Transverse colon (tissue), 4 donors: ENCODE measurements at regions of chr18 and their contacts with region 1.

Region 1: GRCh38 chr18:31555971-31556747 is 35.5 kb upstream of the TTR start:
- DNase-seq: peak; percentile 18
- H3K4me3 ChIP-seq: no peak overlapping the region
- H3K27ac ChIP-seq: no peak overlapping the region
- H3K4me1 ChIP-seq: no peaks in the 10 kb centered on the region
- H3K27me3 ChIP-seq: no peaks in the 10 kb centered on the region
- CTCF ChIP-seq: peak; percentile 72 to 82 (median 78)
- EP300 ChIP-seq: no peak
- POLR2A ChIP-seq: no peak

Region 2: DNA sequence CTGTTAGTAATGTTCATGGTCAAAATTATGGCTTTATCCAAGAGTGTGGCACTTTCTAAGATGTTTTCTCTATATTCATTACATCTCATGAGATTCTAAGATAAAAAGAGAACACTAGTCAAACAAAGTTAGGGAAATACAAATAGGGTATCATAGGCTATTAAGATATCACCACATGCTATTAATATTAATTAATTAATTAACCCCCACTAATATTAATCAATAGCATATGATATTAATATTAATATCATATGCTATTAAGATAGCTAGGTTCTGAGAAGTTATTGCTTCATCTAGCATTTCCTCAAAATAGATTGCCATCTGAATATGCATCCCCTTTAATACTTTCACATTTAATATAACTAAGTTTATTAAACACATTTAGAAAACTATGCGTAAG is 86.5 kb before region 1 on chr18:
- in situ Hi-C with region 1: no loop called
- intact Hi-C with region 1: no loop called
- DNase-seq: no peak
- H3K4me3 ChIP-seq: no peak overlapping the region
- H3K27ac ChIP-seq: no peak overlapping the region
- H3K4me1 ChIP-seq: no peaks in the 10 kb centered on the region
- H3K27me3 ChIP-seq: no peaks in the 10 kb centered on the region
- CTCF ChIP-seq: no peak
- EP300 ChIP-seq: no peak
- POLR2A ChIP-seq: no peak

Region 3: GRCh38 chr18:31710826-31711225 is 154.7 kb after region 1 on chr18:
- in situ Hi-C with region 1: loop called in 3 of 4 experiments (anchors 10 to 25 kb)
- intact Hi-C with region 1: no loop called
- DNase-seq: no peak
- H3K4me3 ChIP-seq: no peak overlapping the region
- H3K27ac ChIP-seq: no peak overlapping the region
- H3K4me1 ChIP-seq: no peaks in the 10 kb centered on the region
- H3K27me3 ChIP-seq: no peaks in the 10 kb centered on the region
- CTCF ChIP-seq: no peak
- EP300 ChIP-seq: no peak
- POLR2A ChIP-seq: no peak

Region 4: GRCh38 chr18:31722369-31722957 is 166.3 kb after region 1 on chr18:
- in situ Hi-C with region 1: loop called (anchors 10 to 25 kb)
- intact Hi-C with region 1: no loop called
- DNase-seq: peak; percentile 86
- H3K4me3 ChIP-seq: no peak overlapping the region
- H3K27ac ChIP-seq: no peak overlapping the region
- H3K4me1 ChIP-seq: peaks cover 0 to 9% (median 4%) of the 10 kb centered on the region in 4 donors
- H3K27me3 ChIP-seq: peaks cover 4% of the 10 kb centered on the region
- CTCF ChIP-seq: peak; percentile 74 to 90 (median 75)
- EP300 ChIP-seq: no peak
- POLR2A ChIP-seq: no peak

Region 5: GRCh38 chr18:31819106-31819924 is 263.2 kb after region 1 on chr18:
- in situ Hi-C with region 1: loop called in 3 of 4 experiments (anchors 25 kb)
- intact Hi-C with region 1: loop called (anchors 10 kb)
- DNase-seq: no peak
- H3K4me3 ChIP-seq: no peak overlapping the region
- H3K27ac ChIP-seq: no peak overlapping the region
- H3K4me1 ChIP-seq: no peaks in the 10 kb centered on the region
- H3K27me3 ChIP-seq: no peaks in the 10 kb centered on the region
- CTCF ChIP-seq: peak; percentile 59 to 70 (median 65)
- EP300 ChIP-seq: no peak
- POLR2A ChIP-seq: no peak

Region 6: GRCh38 chr18:31954349-31954748 is 398.2 kb after region 1 on chr18:
- in situ Hi-C with region 1: loop called in 1 of 4 experiments (anchors 25 kb)
- intact Hi-C with region 1: no loop called
- DNase-seq: peak; percentile 49
- H3K4me3 ChIP-seq: no peak overlapping the region
- H3K27ac ChIP-seq: no peak overlapping the region
- H3K4me1 ChIP-seq: no peaks in the 10 kb centered on the region
- H3K27me3 ChIP-seq: no peaks in the 10 kb centered on the region
- CTCF ChIP-seq: no peak
- EP300 ChIP-seq: no peak
- POLR2A ChIP-seq: no peak